ENCODE measurements at regions of chr1 and their contacts with region 1.

Region 1: GRCh38 chr1:15640667-15641066 is 23.4 kb downstream of the DDI2 start:
- DNase-seq: no peak
- H3K4me3 ChIP-seq: no peak overlapping the region
- H3K27me3 ChIP-seq: no peaks in the 10 kb centered on the region
- CTCF ChIP-seq: no peak

Region 2: GRCh38 chr1:15624133-15624714 is 16.4 kb before region 1 on chr1:
- CTCF ChIA-PET with region 1: no interaction called
- POLR2A ChIA-PET with region 1: interaction called, 10 read pairs
- DNase-seq: no peak
- H3K4me3 ChIP-seq: no peak overlapping the region
- H3K27me3 ChIP-seq: no peaks in the 10 kb centered on the region
- CTCF ChIP-seq: no peak

Region 3: DNA sequence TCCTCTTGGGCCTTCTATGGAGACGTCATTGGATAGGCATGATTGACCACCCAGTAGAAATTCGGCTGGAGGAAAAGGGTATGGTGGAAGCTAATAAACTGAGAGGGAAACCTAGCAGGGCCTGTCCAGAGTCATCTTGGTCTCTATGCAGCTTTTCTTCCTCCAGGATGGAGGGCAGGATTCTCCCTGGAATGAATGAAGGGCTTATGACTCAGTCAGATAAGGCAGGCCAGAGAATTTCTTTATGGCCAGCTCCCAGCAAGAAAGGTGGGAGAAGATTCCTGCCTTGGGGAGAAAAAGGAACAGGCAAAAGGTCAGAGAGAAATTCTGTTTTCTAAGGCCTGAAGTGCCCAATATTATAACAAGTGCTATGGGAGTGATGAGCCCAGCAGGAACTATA is 135.0 kb after region 1 on chr1:
- CTCF ChIA-PET with region 1: no interaction called
- POLR2A ChIA-PET with region 1: no interaction called
- DNase-seq: no peak
- H3K4me3 ChIP-seq: no peak overlapping the region
- H3K27me3 ChIP-seq: no peaks in the 10 kb centered on the region
- CTCF ChIP-seq: no peak

Measured in BJ (cell line).